ENCODE measurements at regions of chr4 and their contacts with region 1.

Region 1: GRCh38 chr4:135418353-135418752 is 1216.8 kb upstream of the PABPC4L start:
- DNase-seq: peak in 1 of 2 experiments; percentile 10
- H3K4me3 ChIP-seq: no peak overlapping the region
- H3K4me3 Mint-ChIP-seq: no peak overlapping the region
- H3K27ac Mint-ChIP-seq: no peak overlapping the region
- H3K4me1 ChIP-seq: no peaks in the 10 kb centered on the region
- H3K4me1 Mint-ChIP-seq: no peaks in the 10 kb centered on the region
- H3K27me3 ChIP-seq: no peaks in the 10 kb centered on the region
- H3K27me3 Mint-ChIP-seq: no peaks in the 10 kb centered on the region
- CTCF ChIP-seq: peak; percentile 35

Region 2: DNA sequence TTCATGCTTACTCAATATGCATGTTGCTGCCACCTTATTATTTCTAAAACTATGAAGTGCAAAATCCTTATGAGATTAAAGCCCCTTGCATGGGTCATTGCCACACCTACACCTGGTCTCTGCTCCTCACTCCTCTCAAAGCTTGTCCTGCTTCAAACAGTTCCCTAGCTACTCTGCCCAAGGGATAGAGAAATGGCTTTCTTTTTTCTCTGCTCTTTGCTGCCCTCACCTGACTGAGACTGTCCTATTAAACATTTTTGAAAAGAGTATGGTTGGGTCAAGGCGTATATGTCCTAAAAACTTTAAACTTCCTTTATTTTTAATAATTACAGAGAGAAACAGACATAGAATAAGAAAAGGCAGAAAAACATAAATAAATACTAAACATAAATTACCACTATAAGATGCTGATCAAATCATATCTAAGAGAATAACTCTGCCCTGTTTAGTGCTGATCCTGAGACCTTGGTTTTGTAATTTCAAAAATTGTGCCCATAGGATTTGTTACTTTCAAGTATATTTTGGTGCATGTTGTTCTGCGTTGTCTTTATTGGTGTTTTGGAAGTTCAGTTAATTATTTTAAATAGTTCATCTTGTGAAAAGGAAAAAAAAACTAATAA is 511.8 kb before region 1 on chr4:
- CTCF ChIA-PET with region 1: no interaction called
- POLR2A ChIA-PET with region 1: no interaction called
- intact Hi-C with region 1: loop called (anchors 1 kb)
- DNase-seq: peak in 1 of 2 experiments; percentile 18
- H3K4me3 ChIP-seq: no peak overlapping the region
- H3K4me3 Mint-ChIP-seq: no peak overlapping the region
- H3K27ac Mint-ChIP-seq: no peak overlapping the region
- H3K4me1 ChIP-seq: no peaks in the 10 kb centered on the region
- H3K4me1 Mint-ChIP-seq: no peaks in the 10 kb centered on the region
- H3K27me3 ChIP-seq: no peaks in the 10 kb centered on the region
- H3K27me3 Mint-ChIP-seq: no peaks in the 10 kb centered on the region
- CTCF ChIP-seq: peak; percentile 42 to 57